Endothelial cell of umbilical vein (primary cell): ENCODE measurements at regions of chr12 and their contacts with region 1.

Region 1: DNA sequence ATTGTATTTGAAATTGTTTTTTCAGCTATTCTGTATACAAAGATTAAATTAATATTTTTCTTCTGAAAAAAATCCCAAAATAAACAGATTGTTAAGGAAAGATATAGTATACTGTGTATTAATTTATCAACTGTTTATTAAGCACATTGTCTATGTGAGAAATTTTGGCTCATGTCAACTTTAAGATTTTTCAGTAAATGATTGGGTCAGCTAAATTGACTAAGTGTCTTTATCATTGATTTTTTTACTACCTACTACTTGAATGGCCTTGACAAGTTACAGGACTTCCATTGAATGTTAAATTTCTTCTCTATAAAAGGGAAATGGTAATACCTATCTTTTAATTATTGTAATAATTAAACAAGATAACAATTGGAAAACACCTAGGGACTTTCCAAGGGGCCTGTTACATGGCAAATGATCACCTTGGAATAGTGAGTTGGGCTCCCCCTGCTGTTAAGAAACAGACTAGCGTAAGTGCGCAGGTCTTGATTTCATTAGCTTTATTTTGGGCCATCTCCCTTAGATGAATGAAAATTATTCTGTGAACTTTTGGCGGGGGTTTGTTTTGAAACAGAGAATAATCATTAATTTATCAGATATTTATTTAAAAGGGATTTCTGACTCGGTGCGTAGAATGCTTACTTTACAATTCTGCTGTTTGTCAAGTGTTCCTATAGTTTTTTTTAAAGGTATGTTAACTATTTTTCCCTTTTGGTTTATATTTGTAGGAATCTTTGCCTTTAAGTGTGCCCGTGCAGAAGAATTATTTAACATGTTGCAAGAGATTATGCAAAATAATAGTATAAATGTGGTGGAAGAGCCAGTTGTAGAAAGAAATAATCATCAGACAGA is 14.5 kb upstream of the CCT2 start:
- DNase-seq: peak; percentile 70
- H3K4me3 ChIP-seq: no peak overlapping the region
- H3K27ac ChIP-seq: no peak overlapping the region
- H3K4me1 ChIP-seq: no peaks in the 10 kb centered on the region
- H3K27me3 ChIP-seq: no peaks in the 10 kb centered on the region
- CTCF ChIP-seq: peak; percentile 64 to 72
- POLR2A ChIP-seq: no peak

Region 2: DNA sequence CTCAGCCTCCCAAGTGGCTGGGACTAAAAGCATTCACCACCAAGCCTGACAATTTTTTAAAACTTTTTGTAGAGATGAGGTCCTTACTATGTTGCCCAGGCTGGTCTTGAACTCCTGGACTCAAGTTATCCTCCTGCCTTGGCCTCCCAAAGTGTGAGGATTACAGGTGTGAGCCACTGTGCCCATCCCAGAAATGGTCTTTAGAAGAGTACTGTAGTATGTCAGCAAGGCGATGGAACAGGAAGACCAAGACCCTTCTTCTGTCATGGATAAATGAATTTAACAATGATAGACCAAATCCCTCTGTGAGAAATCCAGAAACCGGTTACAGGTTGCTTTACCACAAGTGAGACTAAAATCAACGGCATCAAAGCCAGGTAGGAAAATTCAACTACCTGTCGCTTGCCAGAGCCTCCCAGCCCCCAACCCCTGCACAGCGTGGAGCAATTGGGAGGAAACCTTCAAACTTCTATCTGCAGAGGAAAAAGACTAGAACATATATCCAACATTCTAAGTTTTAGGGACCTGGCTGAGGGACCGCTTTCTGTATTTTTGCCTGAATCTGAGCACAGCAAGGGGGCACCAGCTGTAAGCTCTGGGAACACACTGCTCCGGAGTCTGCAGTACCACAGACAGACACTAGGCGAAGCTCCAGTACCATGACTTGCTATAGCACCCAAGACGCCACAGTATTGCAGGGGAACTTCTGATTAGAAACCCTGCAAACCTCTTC is 280.1 kb before region 1 on chr12:
- CTCF ChIA-PET with region 1: interaction called, 14 read pairs
- POLR2A ChIA-PET with region 1: no interaction called
- dilution Hi-C with region 1: no loop called
- intact Hi-C with region 1: no loop called
- DNase-seq: peak; percentile 70
- H3K4me3 ChIP-seq: no peak overlapping the region
- H3K27ac ChIP-seq: no peak overlapping the region
- H3K4me1 ChIP-seq: no peaks in the 10 kb centered on the region
- H3K27me3 ChIP-seq: peaks cover 14 to 35% of the 10 kb centered on the region in 2 experiments
- CTCF ChIP-seq: peak; percentile 77 to 86
- POLR2A ChIP-seq: no peak

Region 3: DNA sequence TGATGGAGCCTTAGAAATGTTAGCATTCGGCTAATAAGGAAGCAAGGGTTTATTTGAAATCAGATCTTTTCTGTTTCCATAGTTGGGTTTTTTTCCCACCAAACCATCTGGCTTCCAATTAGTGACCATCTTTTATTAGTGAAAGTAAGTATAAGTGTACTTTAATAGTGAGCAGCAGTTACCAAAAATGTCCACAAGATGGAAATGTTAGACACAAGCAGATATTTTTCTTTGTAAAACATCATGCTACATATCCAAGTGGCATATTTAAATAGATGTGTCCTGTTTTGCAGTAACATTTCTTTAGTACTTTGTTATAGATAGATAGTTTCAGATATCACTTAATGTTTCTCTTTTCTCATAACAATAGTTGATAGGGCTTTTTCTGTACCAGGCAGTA is 182.4 kb before region 1 on chr12:
- CTCF ChIA-PET with region 1: interaction called, 184 read pairs
- POLR2A ChIA-PET with region 1: interaction called, 5 read pairs
- dilution Hi-C with region 1: loop called (anchors 25 kb)
- intact Hi-C with region 1: loop called (anchors 1 kb)
- DNase-seq: peak; percentile 79
- H3K4me3 ChIP-seq: no peak overlapping the region
- H3K27ac ChIP-seq: no peak overlapping the region
- H3K4me1 ChIP-seq: peaks cover 6% of the 10 kb centered on the region
- H3K27me3 ChIP-seq: no peaks in the 10 kb centered on the region
- CTCF ChIP-seq: peak; percentile 37 to 41
- POLR2A ChIP-seq: no peak

Region 4: DNA sequence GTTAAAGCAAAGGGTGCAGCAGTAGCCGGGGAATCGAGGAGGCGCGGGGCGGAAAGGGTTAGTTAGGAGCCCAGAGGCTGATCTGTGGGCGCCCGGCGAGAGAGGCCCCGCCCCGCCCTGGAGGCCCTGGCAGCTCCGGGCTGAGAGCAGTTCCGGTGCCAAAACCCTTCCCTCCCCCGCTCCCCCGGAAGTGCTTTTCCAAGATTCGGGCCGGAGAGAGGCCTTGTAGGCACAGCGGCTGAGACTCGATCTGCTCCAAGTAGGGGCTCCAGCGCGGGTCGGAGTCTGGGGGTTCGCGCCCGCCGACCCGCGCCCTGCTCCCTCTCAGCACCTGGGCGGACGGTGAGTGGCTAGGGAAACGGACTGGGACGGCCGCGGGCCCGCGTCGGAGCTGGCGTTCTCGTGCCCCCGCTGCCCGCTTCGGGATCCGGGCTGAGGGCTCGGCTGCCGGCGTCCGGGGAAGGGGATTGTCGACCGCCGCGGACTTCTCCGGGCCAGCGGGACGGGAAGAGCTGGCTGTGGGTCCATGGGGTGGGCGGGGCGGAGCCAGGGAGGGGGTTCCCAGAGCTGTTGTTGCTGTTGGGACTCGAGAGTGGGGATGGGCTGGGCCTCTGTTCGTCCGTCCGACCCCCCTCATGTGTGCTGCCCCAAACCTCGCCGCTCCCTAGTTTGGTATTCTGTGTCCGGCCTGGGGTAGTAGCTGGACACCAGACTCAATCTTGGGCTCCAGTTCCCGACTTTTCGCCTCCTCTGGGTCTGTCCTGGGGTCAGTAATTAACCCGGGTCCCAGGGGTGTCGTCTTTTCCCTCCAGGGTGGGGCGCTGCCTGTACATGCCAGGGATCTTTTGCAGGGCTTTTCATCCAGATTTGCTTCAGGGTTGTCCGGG is 100.3 kb before region 1 on chr12 and contains the start of gene FRS2:
- CTCF ChIA-PET with region 1: interaction called, 37 read pairs
- POLR2A ChIA-PET with region 1: no interaction called
- dilution Hi-C with region 1: no loop called
- intact Hi-C with region 1: loop called (anchors 1 kb)
- DNase-seq: peak; percentile 88
- H3K4me3 ChIP-seq: peak within 1 kb of the TSS; percentile 53 to 89 (median 79)
- H3K27ac ChIP-seq: peak within 1 kb of the TSS; percentile 59
- H3K4me1 ChIP-seq: peaks cover 12% of the 10 kb centered on the region
- H3K27me3 ChIP-seq: no peaks in the 10 kb centered on the region
- CTCF ChIP-seq: peak in 1 of 2 donors; percentile 32
- POLR2A ChIP-seq: peak; percentile 96
- total RNA-seq, gene FRS2: 15.5 and 17.1 TPM in 2 replicates

Region 5: DNA sequence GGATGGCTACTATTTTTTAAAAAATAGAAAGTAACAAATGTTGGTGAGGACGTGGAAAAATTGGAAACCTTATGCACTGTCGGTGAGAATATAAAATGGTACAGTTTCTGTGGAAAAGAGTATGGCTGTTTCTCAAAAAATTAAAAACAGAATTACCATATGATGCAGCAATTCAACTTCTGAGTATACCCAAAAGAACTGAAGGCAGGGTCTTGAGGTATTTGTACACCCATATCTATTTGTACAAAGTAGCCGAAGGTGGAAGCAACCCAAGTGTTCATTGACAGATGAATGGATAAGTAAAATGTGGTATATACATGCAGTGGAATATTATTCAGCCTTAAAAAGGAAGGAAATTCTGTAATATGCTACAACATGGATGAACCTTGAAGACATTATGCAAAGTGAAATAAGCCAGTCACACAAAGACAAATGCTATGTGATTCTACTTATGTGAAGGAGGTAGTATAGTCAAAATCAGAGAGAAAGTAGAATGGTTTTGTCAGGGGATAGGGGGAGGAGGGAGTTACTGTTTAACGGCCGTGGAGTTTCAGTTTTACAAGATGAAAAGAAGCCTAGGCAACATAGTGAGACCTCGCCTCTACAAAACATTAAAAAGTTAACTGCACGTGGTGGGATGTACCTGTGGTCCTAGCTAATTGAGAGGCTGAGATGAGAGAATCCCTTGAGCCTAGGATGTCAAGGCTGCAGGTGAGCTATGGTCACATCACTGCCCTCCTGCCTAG is 23.9 kb before region 1 on chr12:
- CTCF ChIA-PET with region 1: interaction called, 22 read pairs
- POLR2A ChIA-PET with region 1: no interaction called
- dilution Hi-C with region 1: no loop called
- intact Hi-C with region 1: no loop called
- DNase-seq: no peak
- H3K4me3 ChIP-seq: no peak overlapping the region
- H3K27ac ChIP-seq: no peak overlapping the region
- H3K4me1 ChIP-seq: no peaks in the 10 kb centered on the region
- H3K27me3 ChIP-seq: no peaks in the 10 kb centered on the region
- CTCF ChIP-seq: no peak
- POLR2A ChIP-seq: no peak

Region 6: GRCh38 chr12:69585189-69586062 is 14.7 kb after region 1 on chr12 and contains the start of gene CCT2:
- CTCF ChIA-PET with region 1: interaction called, 39 read pairs
- POLR2A ChIA-PET with region 1: no interaction called
- dilution Hi-C with region 1: no loop called
- intact Hi-C with region 1: no loop called
- DNase-seq: peak; percentile 97
- H3K4me3 ChIP-seq: peak within 1 kb of the TSS; percentile 16 to 98 (median 97)
- H3K27ac ChIP-seq: peak within 1 kb of the TSS; percentile 61
- H3K4me1 ChIP-seq: peaks cover 8% of the 10 kb centered on the region
- H3K27me3 ChIP-seq: no peaks in the 10 kb centered on the region
- CTCF ChIP-seq: peak in 1 of 2 donors; percentile 62
- POLR2A ChIP-seq: peak; percentile 93
- total RNA-seq, gene CCT2: 245 and 256 TPM in 2 replicates